ENCODE measurements at regions of chr6 and their contacts with region 1.

Region 1: DNA sequence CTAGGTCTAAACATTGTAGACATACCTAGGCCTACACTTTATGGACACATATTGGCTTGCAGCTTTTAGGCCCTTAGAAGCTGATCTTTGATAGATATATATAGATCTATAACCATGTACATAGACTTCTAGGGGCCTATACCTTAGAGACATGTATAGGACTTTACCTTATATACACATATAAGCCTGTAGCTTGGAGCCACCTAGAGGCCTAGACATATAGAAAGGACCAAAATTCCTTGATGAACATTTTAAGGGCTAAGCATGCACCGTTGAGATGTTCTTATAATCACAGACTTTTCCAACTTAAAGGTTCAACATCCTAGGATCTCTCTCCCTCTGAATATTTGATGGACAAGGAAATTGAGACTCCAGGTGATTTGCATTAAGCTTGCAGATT is 371.7 kb upstream of the SASH1 start:
- DNase-seq: peak; percentile 52
- H3K4me3 Mint-ChIP-seq: no peak overlapping the region
- H3K27ac Mint-ChIP-seq: no peak overlapping the region
- H3K4me1 Mint-ChIP-seq: peaks cover 18% of the 10 kb centered on the region
- H3K27me3 Mint-ChIP-seq: no peaks in the 10 kb centered on the region
- CTCF ChIP-seq: peak; percentile 61

Region 2: GRCh38 chr6:147390909-147391536 is 580.0 kb before region 1 on chr6:
- CTCF ChIA-PET with region 1: no interaction called
- POLR2A ChIA-PET with region 1: no interaction called
- intact Hi-C with region 1: loop called (anchors 5 kb)
- DNase-seq: peak; percentile 43
- H3K4me3 Mint-ChIP-seq: no peak overlapping the region
- H3K27ac Mint-ChIP-seq: no peak overlapping the region
- H3K4me1 Mint-ChIP-seq: no peaks in the 10 kb centered on the region
- H3K27me3 Mint-ChIP-seq: no peaks in the 10 kb centered on the region
- CTCF ChIP-seq: peak; percentile 30

Region 3: DNA sequence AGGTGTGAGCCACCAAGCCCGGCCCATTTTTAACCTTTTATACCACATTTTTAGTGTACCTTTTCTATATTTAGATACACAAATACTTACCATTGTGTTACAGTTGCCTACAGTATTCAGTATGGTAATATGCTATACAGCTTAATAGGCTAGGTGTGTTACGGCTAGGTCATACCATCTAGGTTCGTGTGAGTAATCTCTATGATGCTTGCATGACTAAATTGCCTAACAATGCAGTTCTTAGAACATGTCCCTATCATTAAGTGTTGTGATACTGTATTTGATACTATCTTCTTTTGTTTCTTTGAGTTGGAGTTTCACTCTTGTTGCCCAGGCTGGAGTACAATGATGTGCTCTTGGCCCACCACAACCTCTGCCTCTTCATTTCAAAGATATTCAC is 16.0 kb before region 1 on chr6:
- CTCF ChIA-PET with region 1: interaction called, 16 read pairs
- POLR2A ChIA-PET with region 1: interaction called, 5 read pairs
- intact Hi-C with region 1: no loop called
- DNase-seq: peak; percentile 52
- H3K4me3 Mint-ChIP-seq: no peak overlapping the region
- H3K27ac Mint-ChIP-seq: no peak overlapping the region
- H3K4me1 Mint-ChIP-seq: peaks cover 14% of the 10 kb centered on the region
- H3K27me3 Mint-ChIP-seq: no peaks in the 10 kb centered on the region
- CTCF ChIP-seq: no peak

Measured in MCF 10A (cell line).